ENCODE measurements at regions of chr11 and their contacts with region 1.

Region 1: DNA sequence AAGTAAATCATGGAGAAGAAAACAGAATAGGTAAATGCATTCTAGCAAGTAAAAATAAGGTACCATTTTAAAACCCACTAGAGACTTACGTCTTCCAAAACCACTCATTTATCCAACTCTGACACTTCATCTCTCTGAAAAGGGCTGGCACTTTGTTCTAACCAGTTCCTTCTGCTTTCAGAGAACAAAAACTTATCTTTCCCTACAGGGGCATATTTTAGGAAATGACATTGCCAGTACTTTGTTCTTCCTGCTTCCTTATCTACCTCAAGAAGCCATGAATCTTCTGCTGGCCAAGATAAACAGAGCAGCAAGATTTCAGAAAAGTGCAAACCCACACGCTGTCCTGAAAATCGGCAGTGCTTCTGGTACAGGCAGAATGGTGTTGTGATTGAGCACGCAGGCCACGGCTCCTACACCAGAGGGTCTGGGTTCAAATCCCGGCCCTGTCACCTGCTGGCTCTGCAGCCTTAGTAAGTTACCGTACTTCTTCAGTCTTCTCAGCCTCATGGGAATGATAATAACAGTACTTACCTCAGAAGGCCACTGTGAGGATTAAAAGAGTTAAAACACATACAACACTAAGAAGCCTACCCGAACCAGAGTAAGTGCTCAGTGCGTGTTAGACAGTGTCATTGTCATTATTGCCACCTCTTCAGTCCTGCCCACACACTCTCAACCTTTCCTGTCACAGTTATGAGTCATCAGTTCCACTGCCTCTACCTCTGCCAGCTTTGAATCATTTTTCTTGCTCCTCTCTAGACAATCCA is 11.0 kb downstream of the MPZL3 start:
- DNase-seq: peak; percentile 84
- H3K4me3 Mint-ChIP-seq: peak overlapping the region; percentile 78
- H3K27ac Mint-ChIP-seq: peak overlapping the region; percentile 96
- H3K4me1 Mint-ChIP-seq: peaks cover 88% of the 10 kb centered on the region
- H3K27me3 Mint-ChIP-seq: no peaks in the 10 kb centered on the region

Region 2: GRCh38 chr11:118206391-118207031 is 34.7 kb before region 1 on chr11:
- CTCF ChIA-PET with region 1: interaction called, 8 read pairs
- POLR2A ChIA-PET with region 1: interaction called, 13 read pairs
- intact Hi-C with region 1: loop called (anchors 1 kb)
- DNase-seq: no peak
- H3K4me3 Mint-ChIP-seq: peak overlapping the region; percentile 22
- H3K27ac Mint-ChIP-seq: no peak overlapping the region
- H3K4me1 Mint-ChIP-seq: peaks cover 53% of the 10 kb centered on the region
- H3K27me3 Mint-ChIP-seq: no peaks in the 10 kb centered on the region

Region 3: GRCh38 chr11:118216621-118217481 is 24.3 kb before region 1 on chr11:
- CTCF ChIA-PET with region 1: interaction called, 6 read pairs
- POLR2A ChIA-PET with region 1: interaction called, 75 read pairs
- intact Hi-C with region 1: loop called (anchors 1 kb)
- DNase-seq: peak; percentile 78
- H3K4me3 Mint-ChIP-seq: peak overlapping the region; percentile 81
- H3K27ac Mint-ChIP-seq: peak overlapping the region; percentile 97
- H3K4me1 Mint-ChIP-seq: peaks cover 97% of the 10 kb centered on the region
- H3K27me3 Mint-ChIP-seq: no peaks in the 10 kb centered on the region

Region 4: GRCh38 chr11:118227865-118228785 is 13.1 kb before region 1 on chr11:
- CTCF ChIA-PET with region 1: interaction called, 8 read pairs
- POLR2A ChIA-PET with region 1: interaction called, 97 read pairs
- intact Hi-C with region 1: loop called (anchors 1 kb)
- DNase-seq: peak; percentile 43
- H3K4me3 Mint-ChIP-seq: peak overlapping the region; percentile 45
- H3K27ac Mint-ChIP-seq: no peak overlapping the region
- H3K4me1 Mint-ChIP-seq: peaks cover 47% of the 10 kb centered on the region
- H3K27me3 Mint-ChIP-seq: no peaks in the 10 kb centered on the region

Region 5: DNA sequence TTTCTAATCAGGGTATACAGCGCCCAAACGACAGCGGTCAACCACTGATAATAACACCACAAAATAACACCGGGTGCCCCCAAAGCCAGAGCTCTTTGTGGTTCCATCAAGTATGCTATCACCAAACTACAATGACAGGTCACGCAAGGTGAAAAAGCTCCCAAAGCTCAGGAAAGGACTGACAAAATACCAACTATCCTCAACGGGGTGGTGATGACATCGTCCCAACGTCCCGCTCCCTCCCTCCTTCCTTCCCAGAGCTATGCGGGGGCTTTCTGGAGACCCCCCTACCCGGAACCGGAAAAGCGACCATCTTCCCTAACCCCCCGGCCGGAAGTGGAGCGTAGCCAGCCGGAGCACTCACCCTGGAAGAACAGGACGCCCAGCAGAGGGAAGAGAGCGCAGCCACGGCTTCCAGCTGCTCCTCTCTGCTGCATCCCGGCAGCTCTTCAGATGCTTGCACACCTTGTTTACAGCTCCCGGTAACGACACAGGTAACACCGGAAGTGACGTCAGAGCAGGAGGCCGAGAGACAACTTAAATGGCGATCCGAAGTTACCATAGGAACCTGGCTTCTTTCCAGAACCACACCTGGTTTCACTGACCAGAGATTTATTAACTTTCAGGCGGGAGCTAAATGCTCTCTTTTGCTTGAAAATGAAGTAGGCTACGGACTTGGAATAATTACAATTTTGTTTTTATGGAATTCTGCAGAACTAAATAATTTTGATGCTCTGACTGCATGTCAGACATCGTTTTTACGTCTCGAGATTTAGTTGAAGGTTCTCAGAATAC is 10.9 kb after region 1 on chr11 and contains the start of gene MPZL3:
- CTCF ChIA-PET with region 1: interaction called, 4 read pairs
- POLR2A ChIA-PET with region 1: interaction called, 31 read pairs
- intact Hi-C with region 1: loop called (anchors 1 kb)
- DNase-seq: peak; percentile 89
- H3K4me3 Mint-ChIP-seq: peak within 1 kb of the TSS; percentile 99
- H3K27ac Mint-ChIP-seq: peak within 1 kb of the TSS; percentile 97
- H3K4me1 Mint-ChIP-seq: peaks cover 37% of the 10 kb centered on the region
- H3K27me3 Mint-ChIP-seq: no peaks in the 10 kb centered on the region
- total RNA-seq, gene MPZL3: 47.3 to 49.0 TPM

Region 6: DNA sequence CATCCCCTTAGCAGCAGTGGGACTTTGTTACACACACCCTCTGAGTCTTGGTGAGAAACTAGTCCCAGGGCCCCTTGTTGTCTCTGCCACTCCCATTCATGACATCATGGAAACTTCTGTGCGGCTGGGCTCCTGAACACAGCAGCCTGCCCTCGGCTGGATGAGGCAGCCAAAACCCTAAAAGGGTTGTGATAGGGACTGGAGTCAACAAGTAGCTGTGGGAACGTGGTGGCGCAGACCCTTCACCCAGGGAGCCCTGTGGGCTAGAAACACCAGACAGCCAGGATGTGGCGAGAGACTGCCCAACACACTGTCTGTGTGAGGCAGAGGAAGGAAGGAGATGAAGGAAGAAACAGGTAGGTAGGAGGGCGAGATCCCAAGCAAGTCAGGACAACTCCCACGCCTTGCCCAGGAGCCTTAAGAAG is 97.5 kb after region 1 on chr11:
- CTCF ChIA-PET with region 1: no interaction called
- POLR2A ChIA-PET with region 1: interaction called, 3 read pairs
- intact Hi-C with region 1: loop called (anchors 5 kb)
- DNase-seq: peak; percentile 95
- H3K4me3 Mint-ChIP-seq: peak overlapping the region; percentile 82
- H3K27ac Mint-ChIP-seq: peak overlapping the region; percentile 98
- H3K4me1 Mint-ChIP-seq: peaks cover 48% of the 10 kb centered on the region
- H3K27me3 Mint-ChIP-seq: no peaks in the 10 kb centered on the region

Region 7: DNA sequence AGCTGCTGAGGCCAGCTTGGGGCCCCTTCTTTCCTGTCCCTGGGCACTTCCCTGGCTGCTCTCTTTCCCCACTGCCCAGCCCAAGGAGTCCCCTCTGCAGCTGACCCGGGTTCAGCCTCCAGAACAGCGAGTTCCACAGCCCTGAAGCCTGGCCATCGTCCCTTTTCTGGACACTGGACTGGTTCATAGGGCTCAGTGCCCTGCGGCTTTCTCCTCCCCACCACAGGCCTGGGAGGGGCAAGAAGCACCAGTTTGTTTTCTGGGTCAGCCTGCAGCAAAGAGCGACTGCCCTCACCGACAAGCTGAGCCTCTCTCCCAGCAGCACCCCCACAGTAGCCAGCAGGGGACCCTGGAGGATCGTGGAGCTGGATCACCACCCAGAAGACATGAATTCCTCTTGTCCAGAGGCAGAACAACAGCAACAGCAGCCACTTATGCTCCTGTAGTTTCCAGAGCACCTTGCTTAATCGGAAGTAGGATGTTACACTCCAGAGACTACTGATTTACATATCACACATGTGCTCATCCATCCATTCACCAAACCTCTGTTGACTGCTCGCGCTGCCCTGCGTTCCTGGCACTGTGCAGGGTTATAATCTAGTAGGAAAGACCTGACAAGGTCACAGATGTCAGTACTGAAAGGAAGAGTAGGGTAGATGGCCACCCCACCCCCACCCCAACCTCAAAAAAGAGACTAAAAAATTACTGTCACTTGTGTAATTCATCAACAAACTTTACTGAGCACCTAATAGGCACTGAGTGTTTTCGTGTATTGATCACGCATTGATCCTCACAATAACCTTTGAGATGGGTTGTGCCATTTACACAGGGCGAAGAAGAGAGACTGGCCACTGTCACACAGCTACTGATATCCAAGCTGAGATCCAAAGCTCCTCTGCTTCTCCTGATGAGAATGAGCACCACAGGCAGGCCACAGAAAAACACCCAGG is 629.5 kb after region 1 on chr11:
- CTCF ChIA-PET with region 1: no interaction called
- POLR2A ChIA-PET with region 1: no interaction called
- intact Hi-C with region 1: loop called (anchors 5 kb)
- DNase-seq: peak; percentile 73
- H3K4me3 Mint-ChIP-seq: peak overlapping the region; percentile 83
- H3K27ac Mint-ChIP-seq: peak overlapping the region; percentile 99
- H3K4me1 Mint-ChIP-seq: peaks cover 56% of the 10 kb centered on the region
- H3K27me3 Mint-ChIP-seq: no peaks in the 10 kb centered on the region

Measured in activated CD4-positive, alpha-beta memory T cell treated with anti-CD3 and anti-CD28 coated beads for 36 hours (primary cell).